Naive thymus-derived CD4-positive, alpha-beta T cell (primary cell): ENCODE measurements at regions of chr11 and their contacts with region 1.

Region 1: GRCh38 chr11:125592305-125593112 is at the start of gene STT3A:
- DNase-seq: peak; percentile 94 to 99 (median 99)
- ATAC-seq: peak; percentile 96
- H3K4me3 ChIP-seq: peak within 1 kb of the TSS; percentile 94
- H3K4me3 Mint-ChIP-seq: peak within 1 kb of the TSS; percentile 88 to 99 (median 96)
- H3K27ac ChIP-seq: peak within 1 kb of the TSS; percentile 95
- H3K27ac Mint-ChIP-seq: peak within 1 kb of the TSS; percentile 94 to 100 (median 99)
- H3K4me1 ChIP-seq: peaks cover 13% of the 10 kb centered on the region in 2 donors
- H3K4me1 Mint-ChIP-seq: peaks cover 30 to 62% (median 53%) of the 10 kb centered on the region in 7 donors
- H3K27me3 ChIP-seq: no peaks in the 10 kb centered on the region
- H3K27me3 Mint-ChIP-seq: no peaks in the 10 kb centered on the region
- total RNA-seq, gene STT3A: 39.6 to 153 (median 84.5) TPM

Region 2: GRCh38 chr11:124622531-124623451 is 969.7 kb before region 1 on chr11 and contains the start of gene TBRG1:
- CTCF ChIA-PET with region 1: no interaction called
- POLR2A ChIA-PET with region 1: no interaction called
- intact Hi-C with region 1: loop called in 1 of 2 experiments (anchors 1 kb)
- DNase-seq: peak; percentile 58 to 87 (median 81)
- ATAC-seq: peak; percentile 96
- H3K4me3 ChIP-seq: peak within 1 kb of the TSS; percentile 75
- H3K4me3 Mint-ChIP-seq: peak within 1 kb of the TSS; percentile 89 to 100 (median 98)
- H3K27ac ChIP-seq: peak within 1 kb of the TSS; percentile 91
- H3K27ac Mint-ChIP-seq: peak within 1 kb of the TSS; percentile 91 to 100 (median 98)
- H3K4me1 ChIP-seq: peaks cover 7 to 12% of the 10 kb centered on the region in 2 donors
- H3K4me1 Mint-ChIP-seq: peaks cover 21 to 52% (median 46%) of the 10 kb centered on the region in 7 donors
- H3K27me3 ChIP-seq: no peaks in the 10 kb centered on the region
- H3K27me3 Mint-ChIP-seq: peaks cover 0 to 23% (median 7%) of the 10 kb centered on the region in 5 donors
- total RNA-seq, gene TBRG1: 35.5 to 78.6 (median 63.9) TPM

Region 3: DNA sequence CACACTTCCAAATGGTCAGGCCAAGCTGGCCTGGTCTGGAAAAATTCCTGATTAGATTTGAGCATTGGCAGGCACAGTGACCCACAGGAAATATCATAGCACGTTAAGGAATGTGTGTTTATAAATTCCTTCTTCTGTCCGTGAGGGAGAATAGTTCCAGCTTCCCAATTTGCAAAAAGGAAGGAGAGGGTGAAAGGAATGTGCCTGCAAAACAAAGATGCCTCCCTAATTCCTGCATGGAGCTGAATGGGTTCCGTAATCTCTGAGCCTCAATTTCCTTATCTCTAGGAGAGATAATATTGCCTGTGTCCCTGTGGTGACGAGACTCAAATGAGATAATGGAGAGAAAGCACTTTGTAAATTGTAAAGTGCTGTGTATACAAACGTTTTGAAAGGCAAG is 201.6 kb before region 1 on chr11:
- CTCF ChIA-PET with region 1: no interaction called
- POLR2A ChIA-PET with region 1: no interaction called
- intact Hi-C with region 1: no loop called
- DNase-seq: no peak
- ATAC-seq: no peak
- H3K4me3 ChIP-seq: no peak overlapping the region
- H3K4me3 Mint-ChIP-seq: no peak overlapping the region
- H3K27ac ChIP-seq: no peak overlapping the region
- H3K27ac Mint-ChIP-seq: no peak overlapping the region
- H3K4me1 ChIP-seq: no peaks in the 10 kb centered on the region
- H3K4me1 Mint-ChIP-seq: no peaks in the 10 kb centered on the region
- H3K27me3 ChIP-seq: no peaks in the 10 kb centered on the region
- H3K27me3 Mint-ChIP-seq: peaks cover 13 to 37% (median 18%) of the 10 kb centered on the region in 5 donors

Region 4: DNA sequence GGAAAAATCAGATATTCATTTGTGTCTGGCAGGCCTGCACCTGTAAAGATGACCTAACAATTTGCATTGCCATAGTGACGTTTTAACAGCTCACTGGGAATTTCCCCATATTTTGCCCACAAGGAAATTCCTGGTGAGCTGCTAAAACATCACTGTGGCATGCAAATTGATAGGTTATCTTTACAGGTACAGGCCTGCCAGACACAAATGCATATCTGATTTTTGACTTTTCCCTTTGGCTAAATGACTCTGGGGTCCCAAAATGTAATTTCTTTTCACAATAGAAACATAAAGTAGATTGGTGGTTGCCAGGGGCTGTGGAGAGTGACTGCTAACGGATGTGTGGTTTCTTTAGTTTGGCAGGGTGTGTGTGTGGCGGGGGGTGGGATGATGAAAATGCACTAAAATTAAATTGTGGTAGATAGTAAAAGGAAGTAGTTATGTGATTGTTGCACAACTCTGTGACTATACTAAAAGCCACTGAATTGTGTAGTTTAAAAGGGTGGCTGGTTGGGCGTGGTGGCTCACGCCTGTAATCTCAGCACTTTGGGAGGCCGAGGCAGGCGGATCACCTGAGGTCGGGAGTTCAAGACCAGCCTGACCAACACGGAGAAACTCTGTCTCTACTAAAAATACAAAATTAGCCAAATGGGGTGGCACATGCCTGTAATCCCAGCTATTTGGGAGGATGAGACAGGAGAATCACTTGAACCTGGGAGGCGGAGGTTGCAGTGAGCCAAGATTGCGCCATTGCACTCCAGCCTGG is 78.0 kb before region 1 on chr11:
- CTCF ChIA-PET with region 1: no interaction called
- POLR2A ChIA-PET with region 1: interaction called, 4 read pairs
- intact Hi-C with region 1: loop called (anchors 1 kb)
- DNase-seq: peak; percentile 16 to 72 (median 53)
- ATAC-seq: peak; percentile 87
- H3K4me3 ChIP-seq: no peak overlapping the region
- H3K4me3 Mint-ChIP-seq: peak overlapping the region; percentile 12 to 72 (median 44)
- H3K27ac ChIP-seq: peak overlapping the region; percentile 56
- H3K27ac Mint-ChIP-seq: peak overlapping the region; percentile 58 to 94 (median 85)
- H3K4me1 ChIP-seq: peaks cover 17 to 24% of the 10 kb centered on the region in 2 donors
- H3K4me1 Mint-ChIP-seq: peaks cover 30 to 47% (median 38%) of the 10 kb centered on the region in 7 donors
- H3K27me3 ChIP-seq: no peaks in the 10 kb centered on the region
- H3K27me3 Mint-ChIP-seq: no peaks in the 10 kb centered on the region

Region 5: DNA sequence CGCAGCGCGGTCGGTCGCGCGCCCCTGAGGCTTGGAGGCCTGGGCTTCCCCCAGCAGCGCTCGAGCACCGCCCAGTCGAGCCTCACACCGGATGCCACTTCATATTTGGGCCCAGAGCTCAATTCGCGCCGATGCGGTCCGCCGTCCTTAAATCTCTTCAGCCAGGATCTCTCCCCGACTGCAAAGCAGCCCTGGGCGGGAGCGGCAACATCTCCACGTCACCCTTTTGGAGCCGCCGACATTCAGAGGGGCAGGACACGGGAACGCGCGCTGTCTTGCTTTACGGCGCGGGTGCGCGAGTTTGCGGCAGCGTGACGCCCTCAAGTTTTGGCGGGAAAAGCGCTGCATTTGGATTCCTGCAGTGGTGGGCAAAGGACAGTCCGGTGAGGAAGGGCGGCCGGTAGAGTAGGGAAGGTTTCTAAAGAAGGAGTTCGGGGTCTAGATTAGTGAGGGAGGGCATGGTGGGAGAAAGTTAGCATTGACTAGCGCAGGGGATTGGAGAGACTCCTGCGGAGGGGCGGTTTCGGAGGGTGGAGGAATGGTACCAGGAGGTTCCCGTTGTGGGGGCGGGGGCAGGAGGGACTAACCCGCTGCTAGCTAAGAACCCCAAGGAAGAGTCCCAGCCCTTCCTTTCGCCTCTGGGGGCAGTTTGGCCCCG is 33.2 kb after region 1 on chr11:
- CTCF ChIA-PET with region 1: no interaction called
- POLR2A ChIA-PET with region 1: interaction called, 46 read pairs
- intact Hi-C with region 1: loop called (anchors 1 kb)
- DNase-seq: peak; percentile 70 to 87 (median 82)
- ATAC-seq: peak; percentile 95
- H3K4me3 ChIP-seq: peak overlapping the region; percentile 91
- H3K4me3 Mint-ChIP-seq: peak overlapping the region; percentile 82 to 99 (median 98)
- H3K27ac ChIP-seq: peak overlapping the region; percentile 96
- H3K27ac Mint-ChIP-seq: peak overlapping the region; percentile 64 to 99 (median 98)
- H3K4me1 ChIP-seq: peaks cover 0 to 5% of the 10 kb centered on the region in 2 donors
- H3K4me1 Mint-ChIP-seq: peaks cover 13 to 47% (median 15%) of the 10 kb centered on the region in 7 donors
- H3K27me3 ChIP-seq: no peaks in the 10 kb centered on the region
- H3K27me3 Mint-ChIP-seq: no peaks in the 10 kb centered on the region

Region 6: GRCh38 chr11:126282736-126283591 is 690.5 kb after region 1 on chr11 and contains the start of gene TIRAP:
- CTCF ChIA-PET with region 1: no interaction called
- POLR2A ChIA-PET with region 1: interaction called, 4 read pairs
- intact Hi-C with region 1: loop called in 1 of 2 experiments (anchors 5 kb)
- DNase-seq: peak; percentile 55 to 77 (median 75)
- ATAC-seq: peak; percentile 79
- H3K4me3 ChIP-seq: peak within 1 kb of the TSS; percentile 77
- H3K4me3 Mint-ChIP-seq: peak within 1 kb of the TSS; percentile 88 to 100 (median 98)
- H3K27ac ChIP-seq: peak within 1 kb of the TSS; percentile 86
- H3K27ac Mint-ChIP-seq: peak within 1 kb of the TSS; percentile 93 to 99 (median 97)
- H3K4me1 ChIP-seq: peaks cover 16 to 28% of the 10 kb centered on the region in 2 donors
- H3K4me1 Mint-ChIP-seq: peaks cover 35 to 62% (median 55%) of the 10 kb centered on the region in 7 donors
- H3K27me3 ChIP-seq: no peaks in the 10 kb centered on the region
- H3K27me3 Mint-ChIP-seq: no peaks in the 10 kb centered on the region
- total RNA-seq, gene TIRAP: 12.9 to 21.5 (median 17.9) TPM